GM12878 (cell line): ENCODE measurements at regions of chr12 and their contacts with region 1.

Region 1: DNA sequence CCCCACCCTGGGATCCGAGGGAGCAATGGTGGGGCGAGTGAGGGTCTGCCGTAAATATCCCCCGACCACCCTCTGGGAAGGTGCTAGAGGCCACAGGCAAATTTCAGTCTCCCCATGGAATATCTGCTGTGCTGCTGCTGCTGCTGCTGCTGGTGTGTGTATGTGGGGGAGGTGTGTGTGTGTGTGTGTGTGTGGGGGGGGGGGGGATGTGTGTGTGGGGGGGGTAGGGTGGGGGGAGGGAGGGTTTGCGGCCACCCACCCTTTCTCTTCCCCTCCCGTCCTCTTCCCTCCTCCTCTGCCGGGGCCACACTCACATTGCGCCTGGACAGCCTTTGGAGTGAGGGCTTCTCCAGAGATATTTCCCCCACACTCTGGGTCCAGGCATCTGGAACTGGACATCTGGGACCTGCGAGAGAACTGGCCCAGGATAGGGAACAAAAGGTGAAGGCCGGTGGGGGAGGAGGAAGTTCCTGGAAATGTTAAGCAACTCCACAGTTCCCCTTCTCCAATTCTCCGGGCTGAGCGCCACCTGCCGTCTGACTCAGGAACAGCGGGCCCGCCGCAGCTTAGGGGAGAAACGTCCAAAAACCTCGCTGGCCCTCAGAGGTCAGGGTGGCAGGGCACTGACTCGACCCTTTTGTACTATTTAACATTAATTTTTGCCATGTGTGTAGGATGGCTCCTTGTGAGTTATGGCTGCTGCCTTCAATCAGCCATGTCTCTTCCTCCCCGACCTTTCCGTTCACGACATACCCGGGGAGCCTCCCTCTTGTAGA is at the start of gene C1RL:
- DNase-seq: no peak
- ATAC-seq: peak; percentile 68
- H3K4me3 ChIP-seq: peak within 1 kb of the TSS; percentile 96
- H3K27ac ChIP-seq: peak within 1 kb of the TSS; percentile 99
- H3K4me1 ChIP-seq: peaks cover 12% of the 10 kb centered on the region
- H3K27me3 ChIP-seq: no peaks in the 10 kb centered on the region
- CTCF ChIP-seq: peak; percentile 93 to 98 (median 98)
- EP300 ChIP-seq: 0 out of 4 replicates have a peak, but pooled peaks of 1 of the 2 experiments have one; percentile 14
- POLR2A ChIP-seq: 0 out of 2 replicates have a peak, but pooled peaks have one; percentile 13
- RAD21 ChIP-seq: peak; percentile 56; the same call in 1 of the 2 replicates
- polyA plus RNA-seq, gene C1RL: 1.3 to 2.5 TPM

Region 2: DNA sequence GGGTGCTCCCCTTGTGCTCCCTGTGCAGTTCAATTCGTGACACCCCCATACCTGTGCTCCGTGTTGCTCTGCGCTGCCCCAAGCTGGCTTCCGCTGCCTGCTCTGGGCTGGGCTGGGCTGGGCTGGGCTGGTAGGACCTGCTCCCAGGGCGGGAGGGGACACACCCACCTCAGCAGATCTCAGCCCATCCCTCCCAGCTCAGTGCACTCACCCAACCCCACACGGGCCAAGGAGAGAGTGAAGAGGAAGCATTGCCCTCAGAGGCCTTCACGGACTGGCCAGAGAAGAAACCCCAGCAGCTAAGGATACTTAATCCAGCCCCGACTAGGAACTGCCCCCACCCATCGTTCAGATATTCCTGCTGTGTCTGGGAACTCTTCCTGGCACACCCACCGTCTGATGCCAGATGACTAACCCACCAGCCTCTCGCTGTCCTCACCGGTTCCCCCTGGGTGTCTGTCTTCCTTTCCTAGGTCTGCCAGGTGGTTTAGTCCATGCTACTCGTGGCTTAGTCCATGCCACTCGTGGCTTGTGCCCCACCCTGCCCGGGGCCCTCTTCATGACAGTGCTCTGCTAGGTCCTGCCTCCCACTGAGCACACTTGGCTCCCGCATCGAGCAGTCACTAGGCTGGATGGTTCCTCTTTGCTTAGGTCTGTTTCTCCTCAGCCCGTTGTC is 473.0 kb before region 1 on chr12 and contains the start of gene LPAR5:
- CTCF ChIA-PET with region 1: no interaction called
- POLR2A ChIA-PET with region 1: no interaction called
- RAD21 ChIA-PET with region 1: no interaction called
- SMC1A ChIA-PET with region 1: no interaction called
- in situ Hi-C with region 1: no loop called
- intact Hi-C with region 1: no loop called
- DNase-seq: no peak
- ATAC-seq: peak; percentile 76
- H3K4me3 ChIP-seq: peak within 1 kb of the TSS; percentile 48
- H3K27ac ChIP-seq: peak within 1 kb of the TSS; percentile 53
- H3K4me1 ChIP-seq: peaks cover 54% of the 10 kb centered on the region
- H3K27me3 ChIP-seq: no peaks in the 10 kb centered on the region
- CTCF ChIP-seq: no peak
- EP300 ChIP-seq: no peak
- POLR2A ChIP-seq: peak; percentile 75
- RAD21 ChIP-seq: no peak
- polyA plus RNA-seq, gene LPAR5: 1.3 to 1.7 TPM

Region 3: GRCh38 chr12:6873094-6874014 is 235.6 kb before region 1 on chr12 and contains the start of gene SPSB2:
- CTCF ChIA-PET with region 1: interaction called, 36 read pairs
- POLR2A ChIA-PET with region 1: interaction called, 3 read pairs
- RAD21 ChIA-PET with region 1: interaction called, 6 read pairs
- SMC1A ChIA-PET with region 1: interaction called, 5 read pairs
- in situ Hi-C with region 1: no loop called
- intact Hi-C with region 1: loop called (anchors 2 kb)
- DNase-seq: peak; percentile 69
- ATAC-seq: peak; percentile 91
- H3K4me3 ChIP-seq: peak within 1 kb of the TSS; percentile 87
- H3K27ac ChIP-seq: peak within 1 kb of the TSS; percentile 59
- H3K4me1 ChIP-seq: peaks cover 30% of the 10 kb centered on the region
- H3K27me3 ChIP-seq: no peaks in the 10 kb centered on the region
- CTCF ChIP-seq: no peak
- EP300 ChIP-seq: no peak
- POLR2A ChIP-seq: peak; percentile 77
- RAD21 ChIP-seq: no peak
- polyA plus RNA-seq, gene SPSB2: 0.08 to 0.24 TPM

Region 4: DNA sequence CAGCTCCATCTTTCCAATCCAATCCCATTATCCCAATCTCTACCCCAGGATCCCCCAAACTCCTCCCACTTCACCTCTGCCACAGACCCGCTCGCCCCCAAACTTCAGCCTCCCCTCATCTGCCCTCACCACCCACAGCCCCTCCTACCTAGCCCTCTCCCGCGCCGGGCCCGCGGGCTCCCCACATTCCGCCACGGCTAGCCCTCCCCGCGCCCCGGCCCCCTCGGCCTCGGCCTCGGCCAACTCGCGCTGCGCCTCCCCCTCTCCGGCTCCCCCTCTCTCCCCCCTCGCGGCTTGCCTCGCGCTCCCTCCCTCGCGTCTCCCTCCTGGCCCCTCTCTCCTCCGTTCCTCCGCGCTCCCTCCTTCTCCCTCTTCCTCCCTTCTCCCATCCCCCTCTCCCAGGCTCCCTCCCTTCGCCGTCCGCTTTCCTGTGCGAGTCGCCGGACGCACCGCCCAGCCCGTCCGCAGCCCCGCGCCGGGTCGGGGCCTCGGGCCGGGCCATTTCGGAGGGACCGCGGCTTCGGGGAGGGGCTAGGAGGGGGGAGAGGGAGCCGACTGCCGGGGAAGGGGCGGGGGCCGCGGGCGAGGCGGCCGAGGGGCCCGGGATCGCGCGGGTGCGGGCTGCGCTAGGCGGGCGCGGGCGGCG is 181.5 kb before region 1 on chr12 and contains the start of gene ATN1:
- CTCF ChIA-PET with region 1: interaction called, 61 read pairs
- POLR2A ChIA-PET with region 1: interaction called, 3 read pairs
- RAD21 ChIA-PET with region 1: interaction called, 14 read pairs
- SMC1A ChIA-PET with region 1: interaction called, 3 read pairs
- in situ Hi-C with region 1: no loop called
- intact Hi-C with region 1: loop called (anchors 5 kb)
- DNase-seq: no peak
- ATAC-seq: peak; percentile 43
- H3K4me3 ChIP-seq: peak within 1 kb of the TSS; percentile 95
- H3K27ac ChIP-seq: peak within 1 kb of the TSS; percentile 86
- H3K4me1 ChIP-seq: peaks cover 37% of the 10 kb centered on the region
- H3K27me3 ChIP-seq: no peaks in the 10 kb centered on the region
- CTCF ChIP-seq: no peak
- EP300 ChIP-seq: no peak
- POLR2A ChIP-seq: peak; percentile 79
- RAD21 ChIP-seq: no peak
- polyA plus RNA-seq, gene ATN1: 0.08 to 0.15 TPM

Region 5: GRCh38 chr12:6965026-6965661 is 143.8 kb before region 1 on chr12:
- CTCF ChIA-PET with region 1: interaction called, 13 read pairs
- POLR2A ChIA-PET with region 1: interaction called, 7 read pairs
- RAD21 ChIA-PET with region 1: interaction called, 6 read pairs
- SMC1A ChIA-PET with region 1: interaction called, 7 read pairs
- in situ Hi-C with region 1: loop called (anchors 5 kb)
- intact Hi-C with region 1: loop called (anchors 5 kb)
- DNase-seq: no peak
- ATAC-seq: peak; percentile 66
- H3K4me3 ChIP-seq: no peak overlapping the region
- H3K27ac ChIP-seq: peak overlapping the region; percentile 64
- H3K4me1 ChIP-seq: peaks cover 38% of the 10 kb centered on the region
- H3K27me3 ChIP-seq: no peaks in the 10 kb centered on the region
- CTCF ChIP-seq: peak; percentile 86 to 99 (median 96)
- EP300 ChIP-seq: 0 out of 4 replicates have a peak, but pooled peaks of 1 of the 2 experiments have one; percentile 11
- POLR2A ChIP-seq: peak; percentile 44; the same call in 1 of the 2 replicates
- RAD21 ChIP-seq: peak; percentile 88

Region 6: GRCh38 chr12:7018350-7019042 is 90.5 kb before region 1 on chr12 and contains the start of gene LPCAT3:
- CTCF ChIA-PET with region 1: interaction called, 8 read pairs
- POLR2A ChIA-PET with region 1: interaction called, 10 read pairs
- RAD21 ChIA-PET with region 1: interaction called, 5 read pairs
- SMC1A ChIA-PET with region 1: interaction called, 11 read pairs
- in situ Hi-C with region 1: no loop called
- intact Hi-C with region 1: no loop called
- DNase-seq: peak; percentile 83
- ATAC-seq: peak; percentile 97
- H3K4me3 ChIP-seq: peak within 1 kb of the TSS; percentile 91
- H3K27ac ChIP-seq: peak within 1 kb of the TSS; percentile 75
- H3K4me1 ChIP-seq: no peaks in the 10 kb centered on the region
- H3K27me3 ChIP-seq: no peaks in the 10 kb centered on the region
- CTCF ChIP-seq: peak; percentile 82 to 90 (median 83); a peak in 5 of 6 replicates
- EP300 ChIP-seq: no peak
- POLR2A ChIP-seq: peak; percentile 86
- RAD21 ChIP-seq: peak; percentile 41
- polyA plus RNA-seq, gene LPCAT3: 2.6 to 3.7 TPM

Region 7: DNA sequence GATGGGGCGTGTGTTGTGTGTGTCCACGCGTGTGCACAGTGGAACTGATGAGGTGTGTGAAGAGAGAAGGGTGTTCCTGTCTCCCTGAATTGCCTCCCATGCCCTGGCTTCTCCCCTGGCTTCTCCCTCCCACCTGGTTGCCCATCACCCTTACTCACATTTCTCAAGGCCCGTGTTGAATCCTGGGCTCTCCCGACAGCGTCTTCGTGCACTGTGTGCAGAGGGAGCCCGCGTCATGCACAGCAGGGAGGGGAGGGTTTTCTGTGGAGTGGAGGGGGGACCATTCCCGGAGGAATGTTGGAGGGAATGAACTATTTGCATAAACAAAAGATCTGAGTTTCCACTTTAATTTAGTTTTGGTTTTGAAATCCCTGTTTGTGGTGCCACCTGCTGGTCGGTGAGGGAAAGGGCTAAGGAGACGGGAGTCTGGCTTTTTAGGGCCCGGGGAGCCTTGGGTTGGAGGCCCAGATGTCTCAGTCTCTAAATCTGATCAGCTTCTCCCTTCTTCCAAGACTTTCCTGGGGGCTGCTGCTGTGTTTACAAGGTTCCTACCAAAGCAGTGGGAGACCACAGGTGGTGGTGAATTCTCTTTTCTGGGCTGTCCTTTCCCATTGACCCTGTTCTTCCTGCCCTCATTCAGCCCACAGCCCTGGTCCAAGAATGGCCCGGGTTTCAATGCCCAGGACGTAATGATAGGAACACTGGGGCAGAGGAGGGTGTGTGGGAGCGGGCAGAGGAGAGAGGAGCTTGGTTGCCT is 16.6 kb before region 1 on chr12 and contains the start of gene C1R:
- CTCF ChIA-PET with region 1: interaction called, 26 read pairs
- POLR2A ChIA-PET with region 1: interaction called, 3 read pairs
- RAD21 ChIA-PET with region 1: interaction called, 5 read pairs
- SMC1A ChIA-PET with region 1: interaction called, 12 read pairs
- in situ Hi-C with region 1: no loop called
- intact Hi-C with region 1: no loop called
- DNase-seq: no peak
- ATAC-seq: peak; percentile 90
- H3K4me3 ChIP-seq: peak within 1 kb of the TSS; percentile 72; the same call in 1 of the 2 replicates
- H3K27ac ChIP-seq: no peak within 1 kb of the TSS; the same call in 1 of the 2 replicates
- H3K4me1 ChIP-seq: no peaks in the 10 kb centered on the region
- H3K27me3 ChIP-seq: no peaks in the 10 kb centered on the region; a peak in 1 of 4 replicates
- CTCF ChIP-seq: peak; percentile 85 to 89 (median 88)
- EP300 ChIP-seq: no peak
- POLR2A ChIP-seq: no peak; the same call in 1 of the 2 replicates
- RAD21 ChIP-seq: peak; percentile 76
- polyA plus RNA-seq, gene C1R: 0.31 TPM in 1 of 2 experiments, not detected in the other

Region 8: DNA sequence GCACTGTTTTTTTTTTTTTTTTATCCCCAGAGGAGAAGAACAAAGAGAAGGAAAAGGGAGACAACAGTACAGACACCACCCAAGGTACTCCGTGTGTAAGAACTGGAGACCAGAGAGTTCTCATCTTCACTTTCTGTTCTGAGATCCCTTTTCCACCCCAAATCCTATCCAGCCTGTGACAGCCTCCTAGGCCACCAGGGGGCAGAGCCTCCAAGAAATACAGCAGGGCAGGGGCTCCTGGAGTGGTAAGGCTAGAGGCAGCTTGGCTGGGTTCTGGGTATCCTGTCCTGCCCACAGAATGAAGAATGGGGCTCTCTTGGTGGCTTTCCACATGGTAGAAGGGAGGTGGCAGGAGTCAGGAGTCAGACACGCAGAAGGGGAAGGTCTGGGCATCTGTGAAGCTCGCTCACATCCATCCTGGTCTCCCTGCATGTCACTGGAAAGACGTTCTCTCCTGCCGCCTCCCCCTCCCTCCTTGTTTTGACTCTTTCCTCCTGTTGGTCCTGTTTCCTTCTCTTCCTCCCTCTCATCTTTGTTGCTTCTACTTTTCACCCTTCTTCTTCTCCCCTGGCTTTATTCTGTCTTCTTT is 33.2 kb after region 1 on chr12:
- CTCF ChIA-PET with region 1: interaction called, 44 read pairs
- POLR2A ChIA-PET with region 1: no interaction called
- RAD21 ChIA-PET with region 1: interaction called, 3 read pairs
- SMC1A ChIA-PET with region 1: interaction called, 13 read pairs
- in situ Hi-C with region 1: no loop called
- intact Hi-C with region 1: no loop called
- DNase-seq: no peak
- ATAC-seq: peak; percentile 95
- H3K4me3 ChIP-seq: no peak overlapping the region
- H3K27ac ChIP-seq: no peak overlapping the region
- H3K4me1 ChIP-seq: no peaks in the 10 kb centered on the region
- H3K27me3 ChIP-seq: no peaks in the 10 kb centered on the region
- CTCF ChIP-seq: peak; percentile 55 to 68 (median 59); a peak in 5 of 6 replicates
- EP300 ChIP-seq: no peak
- POLR2A ChIP-seq: no peak
- RAD21 ChIP-seq: peak; percentile 57